GM12878 (cell line): ENCODE measurements at regions of chr10 and their contacts with region 1.

Region 1: GRCh38 chr10:103244663-103245271 is 920 bp upstream of the RPEL1 start:
- DNase-seq: peak; percentile 47
- ATAC-seq: peak; percentile 90
- H3K4me3 ChIP-seq: no peak overlapping the region
- H3K27ac ChIP-seq: no peak overlapping the region
- H3K4me1 ChIP-seq: peaks cover 15% of the 10 kb centered on the region
- H3K27me3 ChIP-seq: no peaks in the 10 kb centered on the region
- CTCF ChIP-seq: peak; percentile 93 to 97 (median 93)
- EP300 ChIP-seq: no peak
- POLR2A ChIP-seq: no peak
- RAD21 ChIP-seq: peak; percentile 98

Region 2: GRCh38 chr10:102904346-102904745 is 340.4 kb before region 1 on chr10:
- CTCF ChIA-PET with region 1: interaction called, 12 read pairs
- POLR2A ChIA-PET with region 1: no interaction called
- RAD21 ChIA-PET with region 1: interaction called, 8 read pairs
- SMC1A ChIA-PET with region 1: interaction called, 9 read pairs
- in situ Hi-C with region 1: no loop called
- intact Hi-C with region 1: no loop called
- DNase-seq: no peak
- ATAC-seq: no peak
- H3K4me3 ChIP-seq: no peak overlapping the region
- H3K27ac ChIP-seq: no peak overlapping the region
- H3K4me1 ChIP-seq: no peaks in the 10 kb centered on the region
- H3K27me3 ChIP-seq: no peaks in the 10 kb centered on the region
- CTCF ChIP-seq: no peak
- EP300 ChIP-seq: no peak
- POLR2A ChIP-seq: no peak
- RAD21 ChIP-seq: no peak

Region 3: DNA sequence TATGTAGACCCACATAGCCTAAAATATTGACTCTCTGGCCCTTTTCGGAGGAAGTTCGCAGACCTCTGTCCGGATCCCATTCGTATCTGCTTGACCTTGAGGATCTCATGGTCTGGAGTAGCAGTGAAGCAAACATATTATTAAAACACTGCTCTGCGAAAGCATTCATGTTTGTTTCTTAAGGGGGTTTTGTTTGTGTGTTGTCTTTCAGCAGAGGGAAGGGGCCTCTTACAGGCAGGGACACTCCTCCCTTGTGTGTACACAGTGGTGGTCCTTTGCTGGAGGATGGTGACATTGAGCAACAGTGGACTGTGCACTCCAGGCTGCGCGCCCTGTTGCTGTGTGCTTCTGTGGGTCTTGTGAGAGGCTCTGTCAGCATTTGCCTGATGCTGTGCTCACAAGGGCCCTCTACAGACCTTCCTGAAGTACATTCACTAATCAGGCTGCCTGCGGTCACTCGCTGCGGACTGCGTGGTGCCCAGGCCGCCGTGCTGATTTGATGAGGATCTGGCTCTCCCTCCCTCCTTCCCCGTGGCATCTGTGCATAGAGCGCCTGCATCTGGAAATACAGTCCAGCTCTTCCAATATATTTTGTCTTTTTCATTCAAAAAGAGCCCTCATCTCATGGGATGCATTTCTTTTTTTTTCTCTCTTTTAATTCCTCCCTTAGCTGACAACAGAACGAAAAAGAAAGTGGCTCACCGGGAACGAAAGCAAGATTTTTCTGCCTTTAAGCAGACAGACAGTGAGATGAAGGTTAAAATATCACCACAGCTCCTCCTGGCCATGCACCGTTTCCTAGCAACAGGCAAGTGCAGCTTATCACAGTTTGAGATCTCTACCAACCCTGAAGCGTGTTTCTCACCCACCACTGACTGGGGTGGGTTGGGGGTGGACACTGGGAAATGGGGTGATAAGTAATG is 190.8 kb before region 1 on chr10:
- CTCF ChIA-PET with region 1: interaction called, 14 read pairs
- POLR2A ChIA-PET with region 1: no interaction called
- RAD21 ChIA-PET with region 1: interaction called, 8 read pairs
- SMC1A ChIA-PET with region 1: interaction called, 12 read pairs
- in situ Hi-C with region 1: no loop called
- intact Hi-C with region 1: no loop called
- DNase-seq: peak; percentile 55
- ATAC-seq: peak; percentile 99
- H3K4me3 ChIP-seq: peak overlapping the region; percentile 49; the same call in 1 of the 2 replicates
- H3K27ac ChIP-seq: no peak overlapping the region; the same call in 1 of the 2 replicates
- H3K4me1 ChIP-seq: no peaks in the 10 kb centered on the region
- H3K27me3 ChIP-seq: no peaks in the 10 kb centered on the region
- CTCF ChIP-seq: peak; percentile 39 to 68 (median 54); a peak in 4 of 6 replicates
- EP300 ChIP-seq: no peak; a peak in 1 of 4 replicates
- POLR2A ChIP-seq: no peak
- RAD21 ChIP-seq: no peak

Region 4: GRCh38 chr10:103080891-103081581 is 163.7 kb before region 1 on chr10:
- CTCF ChIA-PET with region 1: interaction called, 10 read pairs
- POLR2A ChIA-PET with region 1: no interaction called
- RAD21 ChIA-PET with region 1: interaction called, 4 read pairs
- SMC1A ChIA-PET with region 1: interaction called, 11 read pairs
- in situ Hi-C with region 1: loop called (anchors 10 kb)
- intact Hi-C with region 1: loop called (anchors 5 kb)
- DNase-seq: no peak
- ATAC-seq: peak; percentile 33; the same call in 1 of the 3 replicates
- H3K4me3 ChIP-seq: no peak overlapping the region
- H3K27ac ChIP-seq: no peak overlapping the region
- H3K4me1 ChIP-seq: no peaks in the 10 kb centered on the region
- H3K27me3 ChIP-seq: no peaks in the 10 kb centered on the region
- CTCF ChIP-seq: no peak
- EP300 ChIP-seq: no peak
- POLR2A ChIP-seq: no peak; the same call in 1 of the 2 replicates
- RAD21 ChIP-seq: no peak

Region 5: GRCh38 chr10:103111031-103111917 is 133.5 kb before region 1 on chr10:
- CTCF ChIA-PET with region 1: interaction called, 16 read pairs
- POLR2A ChIA-PET with region 1: no interaction called
- RAD21 ChIA-PET with region 1: interaction called, 13 read pairs
- SMC1A ChIA-PET with region 1: interaction called, 17 read pairs
- in situ Hi-C with region 1: no loop called
- intact Hi-C with region 1: no loop called
- DNase-seq: peak; percentile 81
- ATAC-seq: peak; percentile 74
- H3K4me3 ChIP-seq: peak overlapping the region; percentile 25; the same call in 1 of the 2 replicates
- H3K27ac ChIP-seq: peak overlapping the region; percentile 59
- H3K4me1 ChIP-seq: peaks cover 39% of the 10 kb centered on the region
- H3K27me3 ChIP-seq: no peaks in the 10 kb centered on the region
- CTCF ChIP-seq: no peak
- EP300 ChIP-seq: peak; percentile 57 to 84; a peak in 3 of 4 replicates
- POLR2A ChIP-seq: no peak
- RAD21 ChIP-seq: no peak

Region 6: DNA sequence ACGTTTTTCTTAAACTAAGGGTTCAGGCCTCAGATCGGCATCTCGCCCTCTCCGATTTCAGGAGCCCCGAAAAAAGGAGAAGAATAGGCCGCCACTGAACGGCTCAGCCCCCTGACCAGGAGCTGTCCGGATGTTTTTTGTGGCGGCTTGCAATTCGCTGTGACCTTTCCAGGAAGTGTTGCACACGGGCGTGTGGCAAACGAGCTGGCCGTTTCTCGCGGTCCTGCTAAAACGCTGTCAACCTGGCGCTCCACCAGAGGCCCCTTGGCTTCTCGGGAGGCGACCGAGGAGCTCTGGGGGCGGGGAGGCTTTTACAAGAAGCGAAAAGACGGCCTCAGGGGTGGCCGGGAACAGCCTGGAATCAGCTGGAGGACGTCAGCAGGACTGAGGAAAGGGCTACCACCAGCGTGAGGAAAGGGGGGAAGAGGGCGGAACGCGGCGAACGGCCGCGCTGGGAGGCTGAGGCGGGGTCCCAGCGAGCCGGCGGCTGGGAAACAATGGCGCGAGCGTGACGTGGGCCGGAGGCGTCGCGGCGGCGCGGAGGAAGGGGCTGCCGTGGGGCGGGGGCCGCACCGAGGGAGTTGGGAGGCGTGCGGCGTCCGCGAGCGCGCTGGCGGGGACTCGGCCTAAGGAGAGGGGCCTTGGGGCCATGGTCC is 52.2 kb before region 1 on chr10:
- CTCF ChIA-PET with region 1: interaction called, 11 read pairs
- POLR2A ChIA-PET with region 1: no interaction called
- RAD21 ChIA-PET with region 1: interaction called, 7 read pairs
- SMC1A ChIA-PET with region 1: interaction called, 3 read pairs
- in situ Hi-C with region 1: no loop called
- intact Hi-C with region 1: loop called (anchors 5 kb)
- DNase-seq: no peak
- ATAC-seq: peak; percentile 82
- H3K4me3 ChIP-seq: peak overlapping the region; percentile 85
- H3K27ac ChIP-seq: peak overlapping the region; percentile 92
- H3K4me1 ChIP-seq: peaks cover 7% of the 10 kb centered on the region
- H3K27me3 ChIP-seq: no peaks in the 10 kb centered on the region
- CTCF ChIP-seq: no peak
- EP300 ChIP-seq: no peak
- POLR2A ChIP-seq: peak; percentile 71
- RAD21 ChIP-seq: no peak

Region 7: GRCh38 chr10:103373544-103373943 is 128.8 kb after region 1 on chr10:
- CTCF ChIA-PET with region 1: no interaction called
- POLR2A ChIA-PET with region 1: no interaction called
- RAD21 ChIA-PET with region 1: no interaction called
- SMC1A ChIA-PET with region 1: no interaction called
- in situ Hi-C with region 1: no loop called
- intact Hi-C with region 1: no loop called
- DNase-seq: no peak
- ATAC-seq: peak; percentile 57
- H3K4me3 ChIP-seq: peak overlapping the region; percentile 22; the same call in 1 of the 2 replicates
- H3K27ac ChIP-seq: peak overlapping the region; percentile 71
- H3K4me1 ChIP-seq: peaks cover 20% of the 10 kb centered on the region
- H3K27me3 ChIP-seq: no peaks in the 10 kb centered on the region
- CTCF ChIP-seq: no peak
- EP300 ChIP-seq: no peak
- POLR2A ChIP-seq: no peak
- RAD21 ChIP-seq: no peak

Region 8: GRCh38 chr10:103481974-103482531 is 237.3 kb after region 1 on chr10:
- CTCF ChIA-PET with region 1: interaction called, 10 read pairs
- POLR2A ChIA-PET with region 1: no interaction called
- RAD21 ChIA-PET with region 1: no interaction called
- SMC1A ChIA-PET with region 1: interaction called, 3 read pairs
- in situ Hi-C with region 1: no loop called
- intact Hi-C with region 1: no loop called
- DNase-seq: no peak
- ATAC-seq: peak; percentile 93
- H3K4me3 ChIP-seq: no peak overlapping the region
- H3K27ac ChIP-seq: no peak overlapping the region
- H3K4me1 ChIP-seq: no peaks in the 10 kb centered on the region
- H3K27me3 ChIP-seq: no peaks in the 10 kb centered on the region
- CTCF ChIP-seq: peak; percentile 67 to 82 (median 76)
- EP300 ChIP-seq: no peak
- POLR2A ChIP-seq: no peak
- RAD21 ChIP-seq: peak; percentile 83